K562 (cell line): ENCODE measurements at regions of chr14 and their contacts with region 1.

Region 1: DNA sequence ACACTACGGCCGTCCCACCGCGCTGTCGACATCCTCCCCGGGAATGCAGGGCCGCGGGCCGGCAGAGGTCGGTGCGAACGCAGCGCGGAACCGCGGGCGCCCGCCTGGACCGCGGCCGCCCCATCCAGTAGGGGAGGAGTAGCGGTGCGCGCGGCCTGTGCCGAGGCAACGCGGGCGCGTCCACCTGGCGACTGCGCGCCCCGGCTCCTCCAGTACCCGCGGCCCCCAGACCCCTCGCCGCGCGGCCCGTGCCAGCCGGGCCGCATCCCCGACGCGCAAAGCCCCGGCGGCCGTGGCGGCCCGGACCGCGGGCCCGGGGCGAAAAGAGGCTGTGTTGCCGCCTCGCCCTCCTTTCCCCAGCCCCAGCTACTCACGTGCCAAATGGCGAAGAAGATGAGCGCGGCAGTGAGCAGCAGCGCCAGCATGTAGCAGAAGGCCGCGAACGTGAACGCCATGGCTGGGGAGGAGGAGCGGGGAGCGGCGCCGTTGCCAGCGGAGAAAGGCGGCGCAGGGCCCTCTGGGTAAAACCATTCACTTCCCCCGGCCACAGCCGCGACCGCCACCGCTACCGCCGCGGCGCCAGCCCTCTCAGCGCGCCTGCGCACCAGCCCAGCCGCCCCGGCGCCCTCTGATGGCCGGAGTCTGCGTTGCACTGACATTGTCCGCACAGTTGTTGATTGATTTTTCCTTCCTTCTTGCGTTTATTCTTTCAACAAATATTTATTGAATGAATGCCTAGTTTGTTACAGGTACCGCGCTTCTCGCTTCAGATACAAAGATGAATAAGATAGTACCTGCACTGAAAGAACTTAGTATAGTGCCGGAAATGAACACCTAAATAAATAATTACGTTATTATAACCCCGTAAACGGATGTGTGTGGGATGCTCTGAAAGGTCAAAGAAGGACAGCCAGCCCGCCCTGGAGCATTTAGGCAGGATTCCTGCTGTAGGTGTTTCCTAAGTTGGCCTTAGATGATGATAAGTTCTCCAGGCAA is at the start of gene CNIH1:
- DNase-seq: peak; percentile 91 to 93 (median 92)
- ATAC-seq: peak; percentile 96
- H3K4me3 ChIP-seq: peak within 1 kb of the TSS; percentile 91
- H3K27ac ChIP-seq: peak within 1 kb of the TSS; percentile 93
- H3K4me1 ChIP-seq: peaks cover 10 to 14% of the 10 kb centered on the region in 2 experiments; a peak in 4 of 5 replicates
- H3K27me3 ChIP-seq: no peaks in the 10 kb centered on the region
- CTCF ChIP-seq: peak; percentile 82 to 86 (median 86)
- EP300 ChIP-seq: 0 out of 2 replicates have a peak, but pooled peaks have one; percentile 15
- POLR2A ChIP-seq: peak; percentile 76
- RAD21 ChIP-seq: peak; percentile 22 to 31; a peak in 1 of 4 replicates
- polyA plus RNA-seq, gene CNIH1: 253 to 283 TPM

Region 2: DNA sequence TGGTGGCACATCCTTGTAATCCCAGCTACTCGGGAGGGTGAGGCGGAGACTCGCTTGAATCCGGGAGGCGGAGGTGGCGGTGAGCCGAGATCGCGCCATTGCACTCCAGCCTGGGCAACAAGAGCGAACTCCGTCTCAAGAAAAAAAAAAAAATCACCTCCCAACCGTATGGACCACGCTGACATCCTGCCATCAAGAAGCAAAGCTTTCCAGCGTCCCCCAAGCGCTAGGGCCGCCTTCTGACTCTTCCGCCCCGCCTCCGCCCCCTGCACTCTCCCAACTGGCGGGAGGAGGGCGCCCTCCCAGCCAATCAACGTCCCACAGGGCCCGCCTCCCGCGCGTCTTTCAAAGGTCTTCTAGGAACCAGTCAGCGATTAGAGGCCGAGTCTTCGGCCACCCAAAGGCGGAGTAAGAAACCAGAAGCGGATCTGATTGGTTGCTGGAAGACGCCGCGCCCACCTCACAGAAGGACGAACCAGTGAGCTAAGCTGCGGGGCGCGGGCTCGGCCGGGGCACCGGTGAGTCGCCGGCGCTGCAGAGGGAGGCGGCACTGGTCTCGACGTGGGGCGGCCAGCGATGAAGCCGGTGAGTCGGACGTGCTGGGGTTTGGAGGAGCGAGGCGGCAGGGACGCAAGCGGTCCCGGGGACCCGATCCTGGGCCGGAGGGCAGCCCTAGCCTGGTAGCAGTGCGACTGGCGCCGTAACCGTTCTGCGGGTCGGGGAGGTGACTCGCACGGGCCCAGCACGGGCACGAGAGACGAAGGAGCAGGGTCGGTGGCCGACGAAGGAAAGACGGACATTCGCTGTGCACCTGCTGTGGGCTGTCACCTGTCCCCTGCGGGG is 44.5 kb before region 1 on chr14 and contains the start of gene CDKN3:
- CTCF ChIA-PET with region 1: no interaction called
- POLR2A ChIA-PET with region 1: interaction called, 5 read pairs
- in situ Hi-C with region 1: no loop called
- intact Hi-C with region 1: loop called (anchors 2 kb)
- DNase-seq: peak; percentile 91 to 97 (median 94)
- ATAC-seq: peak; percentile 98
- H3K4me3 ChIP-seq: peak within 1 kb of the TSS; percentile 65
- H3K27ac ChIP-seq: peak within 1 kb of the TSS; percentile 86
- H3K4me1 ChIP-seq: peaks cover 15% of the 10 kb centered on the region in 2 experiments; a peak in 4 of 5 replicates
- H3K27me3 ChIP-seq: peaks cover 0 to 7% of the 10 kb centered on the region in 2 experiments; a peak in 2 of 5 replicates
- CTCF ChIP-seq: peak; percentile 32 to 47 (median 33); a peak in 3 of 6 replicates
- EP300 ChIP-seq: no peak
- POLR2A ChIP-seq: peak; percentile 89
- RAD21 ChIP-seq: no peak
- polyA plus RNA-seq, gene CDKN3: 127 to 128 TPM

Region 3: GRCh38 chr14:54488646-54489317 is 47.6 kb after region 1 on chr14 and contains the start of gene GMFB:
- CTCF ChIA-PET with region 1: no interaction called
- POLR2A ChIA-PET with region 1: interaction called, 6 read pairs
- in situ Hi-C with region 1: no loop called
- intact Hi-C with region 1: loop called (anchors 2 kb)
- DNase-seq: peak; percentile 73 to 85 (median 78)
- ATAC-seq: peak; percentile 94
- H3K4me3 ChIP-seq: peak within 1 kb of the TSS; percentile 88
- H3K27ac ChIP-seq: peak within 1 kb of the TSS; percentile 82
- H3K4me1 ChIP-seq: peaks cover 9 to 20% of the 10 kb centered on the region in 2 experiments
- H3K27me3 ChIP-seq: no peaks in the 10 kb centered on the region
- CTCF ChIP-seq: peak; percentile 16 to 45 (median 37); a peak in 2 of 6 replicates
- EP300 ChIP-seq: peak; percentile 30
- POLR2A ChIP-seq: peak; percentile 71
- RAD21 ChIP-seq: no peak
- polyA plus RNA-seq, gene GMFB: 20.1 to 20.5 TPM

Region 4: GRCh38 chr14:54902143-54902520 is 461.0 kb after region 1 on chr14:
- CTCF ChIA-PET with region 1: no interaction called
- POLR2A ChIA-PET with region 1: no interaction called
- in situ Hi-C with region 1: no loop called
- intact Hi-C with region 1: no loop called
- DNase-seq: peak; percentile 27 to 78 (median 40)
- ATAC-seq: peak; percentile 87
- H3K4me3 ChIP-seq: peak overlapping the region; percentile 80
- H3K27ac ChIP-seq: peak overlapping the region; percentile 43
- H3K4me1 ChIP-seq: peaks cover 0 to 15% of the 10 kb centered on the region in 2 experiments; a peak in 3 of 5 replicates
- H3K27me3 ChIP-seq: no peaks in the 10 kb centered on the region
- CTCF ChIP-seq: peak in 1 of 3 experiments; percentile 16; a peak in 1 of 6 replicates
- EP300 ChIP-seq: no peak
- POLR2A ChIP-seq: no peak
- RAD21 ChIP-seq: no peak